ENCODE measurements at regions of chr15 and their contacts with region 1.

Region 1: GRCh38 chr15:96047255-96047931 is 283.1 kb upstream of the NR2F2 start:
- DNase-seq: no peak
- CTCF ChIP-seq: no peak

Region 2: DNA sequence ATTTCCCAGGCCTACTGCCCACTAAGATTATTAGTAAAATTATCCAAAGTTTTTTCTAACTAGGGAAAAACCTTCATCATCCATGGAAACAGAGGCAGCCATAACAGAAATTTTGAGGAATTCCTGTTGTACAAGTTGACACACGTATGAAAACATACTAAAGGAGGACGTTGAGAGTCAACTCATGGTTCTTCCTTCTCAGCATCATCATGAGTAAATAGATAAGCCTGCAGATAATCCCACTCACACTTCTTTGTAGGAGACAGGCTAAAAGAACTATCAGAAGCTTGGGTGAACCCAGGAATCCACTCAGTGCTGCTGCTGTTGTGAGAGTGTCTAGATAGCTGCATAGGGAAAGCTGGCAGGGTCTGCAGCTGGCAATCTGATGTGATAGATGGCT is 411.7 kb before region 1 on chr15:
- CTCF ChIA-PET with region 1: no interaction called
- POLR2A ChIA-PET with region 1: no interaction called
- DNase-seq: no peak
- CTCF ChIP-seq: no peak

Region 3: GRCh38 chr15:95988351-95988805 is 59.0 kb before region 1 on chr15:
- CTCF ChIA-PET with region 1: no interaction called
- POLR2A ChIA-PET with region 1: no interaction called
- DNase-seq: no peak
- CTCF ChIP-seq: no peak

Region 4: DNA sequence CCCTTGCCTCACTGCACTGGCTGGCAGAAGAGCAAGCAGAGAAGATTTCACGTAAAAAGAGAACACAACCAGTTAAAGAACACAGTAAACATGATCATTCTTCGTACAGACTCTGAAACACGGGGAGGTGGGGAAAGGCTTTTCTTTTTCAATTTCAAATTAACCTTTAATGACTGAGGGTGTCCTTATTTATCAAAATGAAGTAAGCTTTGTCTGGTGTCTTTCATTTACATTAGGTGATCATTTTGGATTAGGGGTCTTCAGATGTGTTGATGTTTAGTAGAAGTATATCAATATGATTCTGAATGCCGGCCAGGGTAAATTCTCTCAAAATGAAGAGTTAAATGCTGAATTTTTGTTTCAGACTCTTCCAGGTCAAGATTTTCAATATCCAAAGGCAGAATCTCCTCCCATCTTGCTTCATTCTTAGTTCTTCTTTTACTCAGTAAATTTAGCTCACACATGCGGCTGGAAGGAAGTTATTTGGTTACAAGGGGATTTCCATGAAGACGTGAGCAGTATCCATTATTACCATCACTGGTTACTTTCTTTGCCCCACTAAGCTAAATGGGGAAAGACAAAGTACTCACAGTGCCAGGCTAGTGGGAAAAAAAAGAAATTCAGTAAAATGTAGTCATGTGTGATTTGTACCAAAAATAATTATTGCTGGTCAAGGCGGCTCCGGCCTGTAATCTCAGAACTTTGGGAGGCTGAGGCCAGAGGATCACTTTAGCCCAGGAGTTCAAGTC is 10.9 kb after region 1 on chr15:
- CTCF ChIA-PET with region 1: interaction called, 10 read pairs
- POLR2A ChIA-PET with region 1: no interaction called
- DNase-seq: peak; percentile 25
- CTCF ChIP-seq: no peak

Region 5: DNA sequence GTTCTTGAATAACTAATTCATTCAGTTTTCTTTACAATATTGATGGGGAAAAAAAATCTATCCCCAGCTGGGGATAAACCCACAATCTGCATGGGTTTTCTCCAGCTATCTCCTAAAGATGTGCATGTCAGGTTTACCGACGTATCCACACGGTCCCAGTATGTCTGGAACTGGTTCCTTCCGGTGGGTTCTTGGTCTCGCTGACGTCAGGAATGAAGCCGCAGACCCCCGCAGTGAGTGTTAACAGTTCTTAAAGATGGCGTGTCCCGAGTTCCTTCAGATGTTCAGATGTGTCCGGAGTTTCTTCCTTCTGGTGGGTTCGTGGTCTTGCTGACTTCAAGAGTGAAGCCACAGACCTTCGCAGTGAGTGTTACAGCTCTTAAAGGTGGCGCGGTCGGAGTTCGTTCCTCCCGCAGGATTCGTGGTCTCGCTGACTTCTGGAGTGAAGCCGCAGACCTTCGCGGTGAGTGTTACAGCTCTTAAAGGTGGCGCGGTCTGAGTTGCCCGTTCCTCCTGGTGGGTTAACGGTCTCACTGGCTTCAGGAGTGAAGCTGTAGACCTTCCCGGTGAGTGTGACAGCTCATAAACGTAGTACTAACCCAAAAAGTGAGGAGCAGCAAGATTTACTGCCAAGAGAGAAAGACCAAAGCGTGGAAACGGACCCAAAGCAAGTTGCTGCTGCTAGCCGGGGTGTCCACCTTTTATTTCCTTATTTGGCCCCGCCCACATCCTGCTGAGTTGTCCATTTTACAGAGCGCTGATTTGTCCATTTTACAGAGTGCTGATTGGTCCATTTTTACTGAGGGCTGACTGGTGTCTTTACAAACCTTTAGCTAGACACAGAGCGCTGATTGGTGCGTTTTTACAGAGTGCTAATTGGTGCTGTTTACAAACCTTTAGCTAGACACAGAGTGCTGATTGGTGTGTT is 88.0 kb after region 1 on chr15:
- CTCF ChIA-PET with region 1: no interaction called
- POLR2A ChIA-PET with region 1: no interaction called
- DNase-seq: no peak
- CTCF ChIP-seq: no peak

Region 6: DNA sequence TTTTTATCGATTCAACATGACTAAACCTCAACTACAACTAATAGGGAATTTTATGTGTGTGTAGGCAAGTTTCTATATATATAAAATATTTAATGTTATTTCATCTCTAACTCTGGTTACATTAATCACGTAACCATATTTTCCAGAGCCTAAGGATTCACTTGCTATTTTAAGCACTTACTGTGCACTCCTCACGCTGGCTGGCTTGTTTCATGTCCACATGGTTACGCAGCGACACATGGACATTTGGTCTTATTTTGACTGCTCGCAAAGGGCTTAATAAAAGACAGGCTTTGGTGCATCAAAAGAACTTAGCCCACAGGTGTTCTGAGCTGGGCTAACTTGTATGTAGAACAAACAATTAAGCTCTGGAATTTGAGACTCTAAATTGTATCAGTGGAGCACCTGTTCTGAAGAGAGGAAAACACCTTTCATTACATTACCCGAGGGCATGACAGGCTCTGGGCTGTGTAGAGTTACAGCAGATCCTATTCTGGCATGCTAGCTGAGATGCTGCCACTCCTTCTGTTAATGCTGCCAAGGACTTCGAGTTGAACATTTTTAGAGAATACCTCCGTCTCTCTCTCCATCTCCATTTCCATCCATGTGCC is 153.1 kb after region 1 on chr15:
- CTCF ChIA-PET with region 1: no interaction called
- POLR2A ChIA-PET with region 1: no interaction called
- DNase-seq: no peak
- CTCF ChIP-seq: no peak